Activated CD4-positive, alpha-beta memory T cell treated with anti-CD3 and anti-CD28 coated beads, Interleukin-2, amount 10 ng/mL, durations not matched to agents 7 days and 5 days (primary cell): ENCODE measurements at regions of chr13 and their contacts with region 1.

Region 1: GRCh38 chr13:114110091-114110829 is 22.2 kb downstream of the RASA3 start:
- DNase-seq: peak; percentile 88
- H3K4me3 Mint-ChIP-seq: peak overlapping the region; percentile 75
- H3K27ac Mint-ChIP-seq: peak overlapping the region; percentile 95
- H3K4me1 Mint-ChIP-seq: peaks cover 63% of the 10 kb centered on the region
- H3K27me3 Mint-ChIP-seq: no peaks in the 10 kb centered on the region

Region 2: DNA sequence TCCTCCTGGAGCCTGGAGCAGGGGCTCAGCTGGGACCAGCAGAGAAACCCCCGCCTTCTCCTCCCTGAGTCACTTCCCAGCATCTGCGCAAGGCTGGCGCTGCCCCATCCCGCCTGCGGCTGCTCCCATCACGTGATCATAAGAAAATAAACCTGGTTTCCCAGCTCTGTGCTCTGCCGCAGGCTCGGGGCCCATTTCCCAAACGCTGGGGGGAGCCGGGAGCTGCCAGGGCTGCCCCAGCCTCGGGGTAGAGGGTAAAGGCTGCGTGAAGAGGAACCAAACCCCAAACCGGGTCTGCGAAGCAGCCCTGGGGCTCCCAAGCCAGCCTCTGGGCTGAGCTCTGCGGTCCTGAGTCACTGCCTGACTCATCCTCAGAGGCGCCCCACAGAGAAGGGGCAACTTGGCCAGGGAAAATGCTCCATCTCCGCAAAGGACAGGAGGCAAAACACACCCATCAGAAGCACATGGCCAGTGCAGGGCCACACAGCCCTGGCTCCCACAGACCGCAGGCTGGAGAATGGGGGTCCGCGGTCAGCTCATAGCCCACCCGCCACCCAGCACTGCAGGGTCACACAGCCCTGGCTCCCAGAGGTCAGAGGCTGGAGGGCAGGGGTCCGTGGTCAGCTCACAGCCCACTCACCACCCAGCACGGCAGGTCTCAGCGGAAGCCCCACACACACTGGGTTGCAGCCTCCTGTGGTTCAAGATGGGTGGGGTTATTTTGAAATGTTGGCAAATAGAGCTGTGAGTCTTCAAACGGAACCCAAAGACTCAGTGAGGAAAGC is 44.9 kb before region 1 on chr13:
- CTCF ChIA-PET with region 1: interaction called, 15 read pairs
- POLR2A ChIA-PET with region 1: interaction called, 23 read pairs
- DNase-seq: peak; percentile 81
- H3K4me3 Mint-ChIP-seq: peak overlapping the region; percentile 67
- H3K27ac Mint-ChIP-seq: peak overlapping the region; percentile 89
- H3K4me1 Mint-ChIP-seq: peaks cover 60% of the 10 kb centered on the region
- H3K27me3 Mint-ChIP-seq: no peaks in the 10 kb centered on the region

Region 3: DNA sequence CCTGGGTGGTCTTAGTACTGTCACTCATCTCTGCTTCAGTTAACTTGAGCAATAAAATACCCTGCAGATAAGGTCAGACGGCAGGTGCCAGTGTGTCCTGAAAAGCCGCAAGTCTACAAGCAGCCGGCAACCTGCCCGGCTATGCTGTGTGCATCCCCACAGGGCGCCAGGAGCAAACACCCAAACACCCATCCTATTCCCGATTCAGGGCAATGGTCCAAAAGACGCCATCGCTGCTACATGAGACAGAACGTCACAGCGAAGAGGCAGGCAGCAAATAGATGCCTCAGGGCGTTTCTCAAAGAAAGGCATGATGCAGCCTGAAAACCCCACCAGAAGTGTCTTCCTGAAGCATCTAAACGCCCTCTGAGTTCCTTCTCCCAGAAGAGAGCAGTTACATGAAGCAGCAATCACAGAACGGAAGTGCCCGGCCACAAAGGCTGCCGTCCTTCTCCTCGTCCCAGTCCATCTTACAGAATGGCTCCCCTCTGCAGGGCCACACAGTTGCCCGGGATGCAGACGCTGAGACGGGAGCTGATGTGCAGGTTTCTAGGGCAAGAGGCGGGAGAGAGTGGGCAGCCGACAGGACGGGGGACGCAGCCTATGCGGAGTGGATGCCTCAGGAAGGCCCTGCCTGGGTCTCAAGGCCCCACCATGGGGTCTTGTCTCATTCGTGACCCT is 12.9 kb before region 1 on chr13:
- CTCF ChIA-PET with region 1: no interaction called
- POLR2A ChIA-PET with region 1: no interaction called
- DNase-seq: no peak
- H3K4me3 Mint-ChIP-seq: no peak overlapping the region
- H3K27ac Mint-ChIP-seq: no peak overlapping the region
- H3K4me1 Mint-ChIP-seq: peaks cover 15% of the 10 kb centered on the region
- H3K27me3 Mint-ChIP-seq: no peaks in the 10 kb centered on the region

Region 4: GRCh38 chr13:114132419-114133121 is 22.3 kb after region 1 on chr13 and contains the start of gene RASA3:
- CTCF ChIA-PET with region 1: interaction called, 26 read pairs
- POLR2A ChIA-PET with region 1: interaction called, 84 read pairs
- DNase-seq: peak; percentile 67
- H3K4me3 Mint-ChIP-seq: peak within 1 kb of the TSS; percentile 97
- H3K27ac Mint-ChIP-seq: peak within 1 kb of the TSS; percentile 92
- H3K4me1 Mint-ChIP-seq: peaks cover 60% of the 10 kb centered on the region
- H3K27me3 Mint-ChIP-seq: peaks cover 10% of the 10 kb centered on the region
- total RNA-seq, gene RASA3: 97.2 to 99.3 TPM

Region 5: DNA sequence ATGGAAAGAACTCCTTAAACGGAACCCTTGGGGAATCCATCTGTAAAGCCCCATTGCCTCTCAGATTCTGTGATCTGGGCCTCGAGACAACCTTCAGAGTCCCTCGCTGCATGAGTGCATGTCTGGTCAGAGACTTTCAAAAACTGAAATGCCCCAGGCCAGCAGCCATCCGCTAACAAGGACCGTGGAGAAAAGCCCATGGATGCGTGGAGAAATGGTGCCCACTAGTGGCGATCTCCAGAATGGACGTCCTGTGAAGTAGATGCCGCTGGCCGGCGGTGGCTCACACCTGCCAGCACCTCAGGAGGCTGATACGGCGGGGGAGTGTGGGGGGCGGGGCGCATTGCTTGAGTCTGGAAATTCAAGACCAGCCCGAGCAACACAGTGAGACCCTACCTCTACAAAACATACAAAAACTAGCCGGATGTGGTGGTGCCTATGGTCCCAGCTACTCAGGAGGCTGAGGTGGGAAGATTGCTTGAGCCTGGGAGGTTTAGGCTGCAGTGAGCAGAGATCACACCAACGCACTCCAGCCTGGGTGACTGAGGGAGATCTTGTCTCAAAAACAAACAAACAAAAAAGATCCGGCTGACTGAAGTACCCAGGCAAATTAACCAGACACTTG is 116.6 kb after region 1 on chr13:
- CTCF ChIA-PET with region 1: interaction called, 19 read pairs
- POLR2A ChIA-PET with region 1: interaction called, 4 read pairs
- DNase-seq: peak; percentile 89
- H3K4me3 Mint-ChIP-seq: no peak overlapping the region
- H3K27ac Mint-ChIP-seq: no peak overlapping the region
- H3K4me1 Mint-ChIP-seq: peaks cover 30% of the 10 kb centered on the region
- H3K27me3 Mint-ChIP-seq: peaks cover 22% of the 10 kb centered on the region